ENCODE measurements at regions of chr20 and their contacts with region 1.

Region 1: DNA sequence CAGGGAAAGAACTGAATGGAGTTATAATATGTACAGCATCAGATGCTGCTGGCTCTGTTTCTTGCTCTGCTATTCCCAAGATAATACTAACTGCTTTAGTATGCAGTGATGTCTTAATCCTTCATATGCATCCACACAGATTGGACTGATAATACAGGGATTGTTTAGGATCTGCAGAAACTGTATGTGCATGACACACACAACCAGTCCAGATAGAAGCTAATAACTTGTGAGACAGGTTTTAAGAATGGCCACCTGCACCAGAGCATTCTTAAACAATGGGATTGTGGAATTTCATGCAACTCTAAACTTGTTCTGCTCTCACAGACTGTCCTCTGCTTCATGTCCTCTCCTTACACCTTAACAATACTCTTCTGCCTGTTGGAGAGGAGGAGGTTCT is 90.9 kb downstream of the SPTLC3 start:
- DNase-seq: peak; percentile 29 to 75
- H3K4me3 ChIP-seq: no peak overlapping the region
- H3K27ac ChIP-seq: no peak overlapping the region
- H3K4me1 ChIP-seq: peaks cover 16% of the 10 kb centered on the region
- H3K27me3 ChIP-seq: no peaks in the 10 kb centered on the region
- CTCF ChIP-seq: no peak

Region 2: GRCh38 chr20:12504779-12505178 is 594.9 kb before region 1 on chr20:
- CTCF ChIA-PET with region 1: no interaction called
- POLR2A ChIA-PET with region 1: no interaction called
- intact Hi-C with region 1: no loop called
- DNase-seq: no peak
- H3K4me3 ChIP-seq: no peak overlapping the region
- H3K27ac ChIP-seq: no peak overlapping the region
- H3K4me1 ChIP-seq: no peaks in the 10 kb centered on the region
- H3K27me3 ChIP-seq: no peaks in the 10 kb centered on the region
- CTCF ChIP-seq: no peak

Region 3: GRCh38 chr20:12640255-12640654 is 459.4 kb before region 1 on chr20:
- CTCF ChIA-PET with region 1: no interaction called
- POLR2A ChIA-PET with region 1: no interaction called
- intact Hi-C with region 1: no loop called
- DNase-seq: no peak
- H3K4me3 ChIP-seq: no peak overlapping the region
- H3K27ac ChIP-seq: no peak overlapping the region
- H3K4me1 ChIP-seq: no peaks in the 10 kb centered on the region
- H3K27me3 ChIP-seq: no peaks in the 10 kb centered on the region
- CTCF ChIP-seq: no peak

Region 4: GRCh38 chr20:12984069-12984765 is 115.5 kb before region 1 on chr20:
- CTCF ChIA-PET with region 1: no interaction called
- POLR2A ChIA-PET with region 1: no interaction called
- intact Hi-C with region 1: loop called (anchors 2 kb)
- DNase-seq: no peak
- H3K4me3 ChIP-seq: no peak overlapping the region
- H3K27ac ChIP-seq: no peak overlapping the region; the same call in 1 of the 2 replicates
- H3K4me1 ChIP-seq: peaks cover 17% of the 10 kb centered on the region
- H3K27me3 ChIP-seq: no peaks in the 10 kb centered on the region
- CTCF ChIP-seq: no peak

Region 5: GRCh38 chr20:13029687-13030510 is 69.8 kb before region 1 on chr20:
- CTCF ChIA-PET with region 1: no interaction called
- POLR2A ChIA-PET with region 1: no interaction called
- intact Hi-C with region 1: loop called (anchors 1 kb)
- DNase-seq: peak; percentile 86 to 95
- H3K4me3 ChIP-seq: peak overlapping the region; percentile 29; the same call in 1 of the 2 replicates
- H3K27ac ChIP-seq: peak overlapping the region; percentile 73
- H3K4me1 ChIP-seq: peaks cover 30% of the 10 kb centered on the region
- H3K27me3 ChIP-seq: no peaks in the 10 kb centered on the region
- CTCF ChIP-seq: no peak

Region 6: DNA sequence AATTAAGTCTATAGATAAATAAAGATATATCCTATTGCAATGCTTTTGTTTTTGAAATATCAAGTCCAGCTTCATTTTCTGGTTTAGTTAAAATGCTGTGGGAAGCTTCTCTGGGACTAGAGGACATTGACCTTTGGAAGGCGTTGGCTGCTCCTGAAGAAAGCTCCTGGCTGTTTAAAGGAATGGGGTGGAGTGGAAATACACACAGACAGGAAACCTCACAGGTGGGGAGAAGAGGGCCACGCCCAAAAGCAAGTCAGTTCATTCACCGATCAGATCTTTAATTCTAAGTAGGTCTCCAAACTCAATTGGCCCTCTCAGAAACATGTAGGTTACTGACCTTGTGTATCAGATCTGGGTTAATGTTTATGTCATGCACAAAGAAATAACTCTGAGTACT is 31.3 kb before region 1 on chr20:
- CTCF ChIA-PET with region 1: no interaction called
- POLR2A ChIA-PET with region 1: no interaction called
- intact Hi-C with region 1: loop called (anchors 2 kb)
- DNase-seq: peak; percentile 50 to 57
- H3K4me3 ChIP-seq: no peak overlapping the region
- H3K27ac ChIP-seq: no peak overlapping the region
- H3K4me1 ChIP-seq: peaks cover 14% of the 10 kb centered on the region
- H3K27me3 ChIP-seq: no peaks in the 10 kb centered on the region
- CTCF ChIP-seq: no peak

Region 7: GRCh38 chr20:13322621-13323020 is 222.9 kb after region 1 on chr20:
- CTCF ChIA-PET with region 1: no interaction called
- POLR2A ChIA-PET with region 1: no interaction called
- intact Hi-C with region 1: no loop called
- DNase-seq: no peak
- H3K4me3 ChIP-seq: no peak overlapping the region
- H3K27ac ChIP-seq: no peak overlapping the region
- H3K4me1 ChIP-seq: no peaks in the 10 kb centered on the region
- H3K27me3 ChIP-seq: no peaks in the 10 kb centered on the region
- CTCF ChIP-seq: no peak